OCI-LY7 (cell line): ENCODE measurements at regions of chr4 and their contacts with region 1.

Region 1: GRCh38 chr4:145956288-145956890 is 17.8 kb upstream of the ZNF827 start:
- DNase-seq: peak; percentile 73
- H3K4me3 ChIP-seq: no peak overlapping the region
- H3K27ac ChIP-seq: no peak overlapping the region
- H3K4me1 ChIP-seq: peaks cover 3% of the 10 kb centered on the region
- CTCF ChIP-seq: peak; percentile 99

Region 2: GRCh38 chr4:146049802-146050201 is 93.4 kb after region 1 on chr4:
- CTCF ChIA-PET with region 1: interaction called, 3 read pairs
- POLR2A ChIA-PET with region 1: interaction called, 3 read pairs
- intact Hi-C with region 1: loop called (anchors 5 kb)
- DNase-seq: peak; percentile 95
- H3K4me3 ChIP-seq: peak overlapping the region; percentile 43
- H3K27ac ChIP-seq: peak overlapping the region; percentile 98
- H3K4me1 ChIP-seq: peaks cover 66% of the 10 kb centered on the region
- CTCF ChIP-seq: 0 out of 2 replicates have a peak, but pooled peaks have one; percentile 28

Region 3: DNA sequence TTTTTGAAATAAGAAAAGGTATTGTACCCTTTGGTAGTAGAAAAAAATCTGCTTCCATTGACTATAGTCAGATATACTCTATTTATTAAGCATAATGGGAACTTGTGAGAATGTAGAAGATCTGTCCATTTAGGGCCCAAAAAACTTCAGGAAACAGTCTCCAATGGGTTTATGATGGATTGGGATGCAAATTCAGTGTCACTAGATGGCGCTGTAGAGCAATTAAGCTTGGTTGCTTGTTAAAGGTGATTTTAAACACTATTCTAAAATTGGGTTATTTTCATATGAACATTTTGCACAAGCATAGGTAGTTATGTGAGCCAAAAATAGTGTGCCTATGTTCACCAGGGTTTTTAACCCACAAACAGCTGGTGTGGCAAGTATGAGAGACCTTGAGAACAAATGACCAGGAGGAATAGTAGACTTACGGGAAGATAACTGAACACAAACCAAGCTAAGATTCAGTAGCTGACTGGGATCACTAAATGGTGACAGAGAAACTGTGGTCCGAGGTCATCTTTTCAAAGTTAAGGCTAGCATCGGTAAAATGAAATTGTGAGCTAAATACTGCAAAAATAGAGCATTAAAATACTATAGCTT is 138.8 kb after region 1 on chr4:
- CTCF ChIA-PET with region 1: no interaction called
- POLR2A ChIA-PET with region 1: interaction called, 4 read pairs
- intact Hi-C with region 1: loop called (anchors 1 kb)
- DNase-seq: peak; percentile 73
- H3K4me3 ChIP-seq: no peak overlapping the region
- H3K27ac ChIP-seq: no peak overlapping the region
- H3K4me1 ChIP-seq: peaks cover 31% of the 10 kb centered on the region
- CTCF ChIP-seq: peak; percentile 100

Region 4: DNA sequence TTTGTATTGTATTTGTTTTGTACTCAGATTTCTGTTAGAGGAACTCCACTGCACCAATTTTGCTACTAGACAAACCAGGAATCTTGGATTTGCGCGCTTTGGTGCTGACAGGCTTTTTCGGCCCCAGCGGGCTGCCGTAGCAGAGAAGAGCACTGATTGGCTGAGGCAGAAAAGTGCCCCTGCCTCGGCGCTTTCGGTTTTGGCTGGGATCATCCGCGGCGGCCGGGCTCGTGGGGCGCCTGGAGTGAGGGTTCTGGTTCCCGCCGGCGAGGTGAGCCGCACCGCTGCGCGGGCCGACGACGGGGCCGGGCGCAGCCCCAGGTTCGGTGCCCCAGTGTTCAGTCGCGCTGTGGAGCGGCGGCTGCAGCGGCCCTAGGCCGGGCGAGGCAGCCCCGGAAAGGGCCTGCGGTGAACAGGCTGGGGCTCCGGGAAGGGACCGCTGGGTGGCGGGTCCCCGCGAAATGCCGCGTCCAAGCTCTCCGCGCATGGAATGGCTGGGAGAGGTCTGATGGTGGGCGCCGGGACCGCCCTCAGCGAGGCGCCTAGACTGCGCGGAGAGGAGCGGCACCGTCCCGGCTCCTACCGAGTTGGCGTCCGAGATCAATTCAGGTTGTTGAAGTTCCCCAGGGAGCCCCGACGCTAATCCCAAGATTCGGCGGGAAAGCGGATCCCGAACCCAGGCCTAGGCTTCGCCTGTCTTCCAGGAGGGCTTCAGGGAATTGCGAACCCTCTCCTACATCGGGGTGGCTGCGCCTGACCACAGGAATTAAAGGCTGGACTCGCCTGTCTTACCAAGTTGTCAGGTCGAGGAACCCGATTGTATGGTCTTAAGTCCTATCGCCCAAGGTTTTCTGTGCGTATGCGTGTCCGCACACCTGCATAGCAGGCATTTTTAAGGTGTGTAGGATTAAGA is 219.4 kb after region 1 on chr4 and contains the start of gene LSM6:
- CTCF ChIA-PET with region 1: no interaction called
- POLR2A ChIA-PET with region 1: no interaction called
- intact Hi-C with region 1: loop called (anchors 5 kb)
- DNase-seq: peak; percentile 86
- H3K4me3 ChIP-seq: peak within 1 kb of the TSS; percentile 92
- H3K27ac ChIP-seq: peak within 1 kb of the TSS; percentile 56
- H3K4me1 ChIP-seq: peaks cover 46% of the 10 kb centered on the region
- CTCF ChIP-seq: 0 out of 2 replicates have a peak, but pooled peaks have one; percentile 28
- total RNA-seq, gene LSM6: 123 and 132 TPM in 2 replicates